ENCODE measurements at regions of chr6 and their contacts with region 1.

Region 1: DNA sequence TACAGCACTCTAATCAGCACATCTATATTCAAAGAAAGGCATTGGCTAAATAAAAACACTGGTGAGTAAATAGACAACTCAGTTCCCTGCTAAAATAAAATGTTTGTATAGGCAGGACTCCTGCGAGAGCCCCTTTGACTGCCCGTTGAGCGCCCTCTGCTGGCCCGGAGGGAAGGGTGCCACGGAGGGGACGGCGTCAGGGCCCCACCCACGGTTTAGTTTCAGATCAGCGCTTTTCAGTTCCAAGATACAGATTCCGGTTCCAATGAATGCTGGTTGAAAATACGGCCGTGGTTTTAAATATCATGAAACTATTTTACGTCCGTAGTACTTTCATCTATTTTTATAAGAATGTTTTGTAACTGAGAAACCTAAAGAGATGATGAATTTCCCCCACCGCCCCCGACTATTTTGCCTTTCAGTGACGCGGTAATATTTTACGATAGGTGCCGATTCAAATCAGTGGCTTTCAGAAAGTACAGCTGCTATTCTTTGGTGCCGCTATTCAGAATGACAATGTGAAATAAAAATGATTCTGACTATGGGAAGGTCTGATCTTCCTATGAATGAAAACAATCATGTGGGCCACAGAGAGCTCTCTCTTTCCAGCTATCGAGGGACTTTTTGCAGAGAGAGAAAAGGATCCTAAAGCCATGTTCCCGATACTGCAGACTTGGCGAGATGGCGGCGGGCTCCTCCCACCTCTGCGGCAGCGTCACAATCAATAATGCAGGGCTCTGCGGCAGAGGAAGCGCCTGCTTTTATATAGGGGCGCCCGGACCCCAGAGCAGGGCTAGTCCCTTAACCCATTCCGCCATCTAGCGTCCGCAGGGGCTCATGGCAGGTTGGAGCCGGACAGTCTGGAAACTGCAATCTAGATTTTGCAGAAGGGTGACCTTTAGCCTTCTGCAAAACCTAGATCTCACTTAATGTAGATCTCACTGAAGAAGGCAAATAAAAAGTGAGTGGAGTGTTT is 10.6 kb upstream of the CCN6 start:
- DNase-seq: peak; percentile 87
- CTCF ChIP-seq: peak; percentile 98

Region 2: GRCh38 chr6:111011360-111012142 is 1031.8 kb before region 1 on chr6:
- CTCF ChIA-PET with region 1: interaction called, 11 read pairs
- POLR2A ChIA-PET with region 1: no interaction called
- DNase-seq: peak; percentile 58
- CTCF ChIP-seq: peak; percentile 58

Region 3: GRCh38 chr6:111605100-111605751 is 438.1 kb before region 1 on chr6:
- CTCF ChIA-PET with region 1: no interaction called
- POLR2A ChIA-PET with region 1: no interaction called
- DNase-seq: peak; percentile 48
- CTCF ChIP-seq: no peak

Region 4: GRCh38 chr6:112010328-112010727 is 33.0 kb before region 1 on chr6:
- CTCF ChIA-PET with region 1: interaction called, 18 read pairs
- POLR2A ChIA-PET with region 1: no interaction called
- DNase-seq: no peak
- CTCF ChIP-seq: peak; percentile 4

Region 5: DNA sequence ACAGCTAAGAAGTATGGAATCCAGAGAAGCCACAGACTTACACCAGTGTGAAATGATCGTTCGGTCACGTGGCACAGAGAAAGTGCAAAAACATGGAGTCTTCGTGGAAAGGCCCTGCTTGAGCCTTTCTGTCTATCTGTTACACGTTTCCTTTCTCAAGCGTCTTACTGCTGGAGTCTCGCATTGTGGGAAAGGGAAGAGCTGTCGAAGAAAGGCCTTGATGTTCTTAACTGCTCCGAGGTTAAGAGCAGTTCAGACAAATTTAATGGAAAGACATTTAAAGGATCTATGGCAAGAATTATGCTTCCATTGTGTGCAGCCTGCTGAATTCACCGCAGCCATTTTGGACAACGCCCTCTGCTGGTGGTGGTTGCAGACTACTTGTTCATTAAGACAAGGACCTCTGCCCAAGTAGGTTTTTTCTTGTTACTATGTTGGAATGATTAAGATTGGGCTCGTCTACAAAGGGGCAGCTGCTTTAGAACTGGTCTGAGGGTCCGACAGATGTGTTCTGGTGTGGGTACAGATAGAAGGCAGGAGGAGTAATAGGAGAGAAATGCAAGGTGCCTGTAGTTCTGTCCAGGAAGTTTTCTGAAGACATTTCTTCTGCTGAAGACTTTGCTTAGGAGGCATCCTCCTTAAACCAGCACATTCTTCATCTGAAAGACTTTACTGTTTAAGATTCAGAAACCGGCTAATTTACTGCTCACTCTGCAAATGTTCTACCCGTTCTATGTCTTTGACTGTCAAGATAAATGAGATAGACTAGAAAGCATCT is 14.1 kb before region 1 on chr6:
- CTCF ChIA-PET with region 1: interaction called, 52 read pairs
- POLR2A ChIA-PET with region 1: no interaction called
- DNase-seq: peak; percentile 60
- CTCF ChIP-seq: peak; percentile 75

Region 6: DNA sequence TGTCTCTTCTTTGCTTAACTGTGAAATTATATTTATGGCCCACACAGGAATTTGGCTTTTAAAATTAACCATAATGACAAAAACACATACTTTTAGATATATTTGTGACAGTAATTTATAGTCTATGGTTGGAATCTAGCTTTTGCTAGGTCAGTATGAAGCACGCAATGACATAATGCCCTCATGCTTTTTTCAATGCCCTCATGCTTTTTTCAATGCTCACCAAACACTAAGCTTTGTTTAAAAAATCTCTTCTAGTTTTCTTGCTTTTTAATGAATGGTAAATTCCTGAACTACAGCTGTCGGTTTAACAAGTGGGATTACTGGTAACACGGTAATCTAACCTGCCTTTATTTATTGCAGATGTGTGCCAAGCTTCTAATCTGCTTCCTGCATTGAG is 23.3 kb after region 1 on chr6:
- CTCF ChIA-PET with region 1: interaction called, 10 read pairs
- POLR2A ChIA-PET with region 1: no interaction called
- DNase-seq: no peak
- CTCF ChIP-seq: no peak

Region 7: GRCh38 chr6:112130878-112131277 is 87.6 kb after region 1 on chr6:
- CTCF ChIA-PET with region 1: no interaction called
- POLR2A ChIA-PET with region 1: no interaction called
- DNase-seq: no peak
- CTCF ChIP-seq: no peak

Measured in GM10248 (cell line).